CD4-positive, alpha-beta T cell (primary cell): ENCODE measurements at regions of chr17 and their contacts with region 1.

Region 1: GRCh38 chr17:16048797-16049449 is 49.3 kb downstream of the TTC19 start:
- DNase-seq: no peak
- ATAC-seq: no peak
- H3K4me3 ChIP-seq: no peak overlapping the region
- H3K4me3 Mint-ChIP-seq: no peak overlapping the region
- H3K27ac ChIP-seq: no peak overlapping the region
- H3K27ac Mint-ChIP-seq: no peak overlapping the region
- H3K4me1 ChIP-seq: no peaks in the 10 kb centered on the region
- H3K4me1 Mint-ChIP-seq: peaks cover 18% of the 10 kb centered on the region
- H3K27me3 ChIP-seq: no peaks in the 10 kb centered on the region
- H3K27me3 Mint-ChIP-seq: no peaks in the 10 kb centered on the region
- CTCF ChIP-seq: no peak

Region 2: DNA sequence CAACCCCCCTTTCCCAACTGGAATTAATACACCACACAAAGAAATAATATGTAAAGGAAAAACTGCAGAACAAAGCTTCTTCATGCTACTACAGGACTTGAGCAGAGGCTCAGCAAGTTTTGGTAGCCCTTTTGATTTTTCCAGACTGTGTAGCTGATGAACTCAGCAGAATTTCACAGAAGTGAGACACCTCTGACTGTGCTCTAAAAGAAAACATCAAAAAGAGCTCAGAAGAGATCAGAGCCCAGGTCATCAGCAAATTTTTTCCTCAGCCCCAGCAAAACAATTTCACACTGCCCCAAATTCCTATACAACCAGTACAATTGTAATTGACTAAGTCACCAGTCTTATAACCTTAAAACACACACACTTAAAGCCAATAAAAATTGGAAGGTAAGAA is 11.3 kb before region 1 on chr17:
- CTCF ChIA-PET with region 1: no interaction called
- POLR2A ChIA-PET with region 1: interaction called, 3 read pairs
- intact Hi-C with region 1: loop called in 1 of 2 experiments (anchors 1 kb)
- DNase-seq: no peak
- ATAC-seq: no peak
- H3K4me3 ChIP-seq: no peak overlapping the region
- H3K4me3 Mint-ChIP-seq: no peak overlapping the region
- H3K27ac ChIP-seq: no peak overlapping the region
- H3K27ac Mint-ChIP-seq: peak overlapping the region; percentile 12
- H3K4me1 ChIP-seq: no peaks in the 10 kb centered on the region
- H3K4me1 Mint-ChIP-seq: peaks cover 6% of the 10 kb centered on the region
- H3K27me3 ChIP-seq: no peaks in the 10 kb centered on the region
- H3K27me3 Mint-ChIP-seq: no peaks in the 10 kb centered on the region
- CTCF ChIP-seq: no peak

Region 3: GRCh38 chr17:16215273-16215964 is 166.5 kb after region 1 on chr17 and contains the start of gene NCOR1:
- CTCF ChIA-PET with region 1: no interaction called
- POLR2A ChIA-PET with region 1: no interaction called
- intact Hi-C with region 1: no loop called
- DNase-seq: peak; percentile 79 to 95 (median 87)
- ATAC-seq: peak; percentile 87
- H3K4me3 ChIP-seq: peak within 1 kb of the TSS; percentile 73
- H3K4me3 Mint-ChIP-seq: peak within 1 kb of the TSS; percentile 100
- H3K27ac ChIP-seq: peak within 1 kb of the TSS; percentile 72 to 79
- H3K27ac Mint-ChIP-seq: peak within 1 kb of the TSS; percentile 99
- H3K4me1 ChIP-seq: peaks cover 36% of the 10 kb centered on the region
- H3K4me1 Mint-ChIP-seq: peaks cover 58% of the 10 kb centered on the region
- H3K27me3 ChIP-seq: no peaks in the 10 kb centered on the region
- H3K27me3 Mint-ChIP-seq: no peaks in the 10 kb centered on the region
- CTCF ChIP-seq: no peak
- total RNA-seq, gene NCOR1: 118 TPM